ENCODE measurements at regions of chr19 and their contacts with region 1.

Region 1: DNA sequence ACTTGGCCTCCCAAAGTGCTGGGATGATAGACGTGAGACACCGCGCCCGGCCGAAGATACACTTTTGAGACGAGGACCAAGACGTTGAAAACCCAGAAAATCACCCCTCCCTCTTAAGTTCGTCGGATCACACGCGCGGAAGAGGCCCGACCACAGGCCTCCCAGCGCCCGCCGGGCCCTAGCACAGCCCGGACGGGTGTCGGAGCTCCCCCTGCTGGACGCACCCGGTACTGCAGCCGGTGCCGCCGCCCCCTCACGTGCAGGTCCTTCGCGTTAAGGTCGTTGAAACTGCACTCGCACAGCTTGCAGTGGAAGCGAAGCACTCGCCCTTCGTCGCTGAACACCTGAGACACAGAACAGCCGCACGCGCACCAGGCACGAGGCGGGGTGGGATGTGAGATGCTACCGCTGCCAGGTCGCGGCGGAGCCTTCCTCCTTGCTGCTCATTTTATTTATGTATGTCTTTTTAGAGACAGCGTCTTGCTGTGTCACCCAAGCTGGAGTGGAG is 35.7 kb upstream of the MATK start:
- DNase-seq: peak; percentile 88
- ATAC-seq: peak; percentile 94
- H3K4me3 ChIP-seq: no peak overlapping the region
- H3K4me3 Mint-ChIP-seq: peak overlapping the region; percentile 23
- H3K27ac ChIP-seq: no peak overlapping the region
- H3K27ac Mint-ChIP-seq: peak overlapping the region; percentile 15
- H3K4me1 ChIP-seq: peaks cover 6 to 16% of the 10 kb centered on the region in 2 donors
- H3K4me1 Mint-ChIP-seq: peaks cover 13% of the 10 kb centered on the region
- H3K27me3 ChIP-seq: peaks cover 0 to 4% (median 0%) of the 10 kb centered on the region in 4 experiments
- H3K27me3 Mint-ChIP-seq: peaks cover 3% of the 10 kb centered on the region
- CTCF ChIP-seq: peak; percentile 99

Region 2: GRCh38 chr19:3665681-3666544 is 156.0 kb before region 1 on chr19:
- CTCF ChIA-PET with region 1: interaction called, 4 read pairs
- POLR2A ChIA-PET with region 1: no interaction called
- intact Hi-C with region 1: loop called (anchors 5 kb)
- DNase-seq: peak; percentile 82
- ATAC-seq: peak; percentile 89
- H3K4me3 ChIP-seq: peak overlapping the region in 4 of 5 experiments; percentile 12 to 50 (median 32)
- H3K4me3 Mint-ChIP-seq: peak overlapping the region; percentile 74
- H3K27ac ChIP-seq: peak overlapping the region in 1 of 2 donors; percentile 55
- H3K27ac Mint-ChIP-seq: peak overlapping the region; percentile 65
- H3K4me1 ChIP-seq: peaks cover 23 to 28% of the 10 kb centered on the region in 2 donors
- H3K4me1 Mint-ChIP-seq: peaks cover 38% of the 10 kb centered on the region
- H3K27me3 ChIP-seq: peaks cover 0 to 4% (median 2%) of the 10 kb centered on the region in 4 experiments
- H3K27me3 Mint-ChIP-seq: no peaks in the 10 kb centered on the region
- CTCF ChIP-seq: peak; percentile 94

Region 3: GRCh38 chr19:3809881-3810707 is 11.8 kb before region 1 on chr19:
- CTCF ChIA-PET with region 1: interaction called, 14 read pairs
- POLR2A ChIA-PET with region 1: no interaction called
- intact Hi-C with region 1: loop called (anchors 1 kb)
- DNase-seq: peak; percentile 83
- ATAC-seq: peak; percentile 67
- H3K4me3 ChIP-seq: peak overlapping the region in 4 of 5 experiments; percentile 0 to 44 (median 14)
- H3K4me3 Mint-ChIP-seq: peak overlapping the region; percentile 63
- H3K27ac ChIP-seq: peak overlapping the region; percentile 71 to 85
- H3K27ac Mint-ChIP-seq: peak overlapping the region; percentile 76
- H3K4me1 ChIP-seq: peaks cover 44 to 66% of the 10 kb centered on the region in 2 donors
- H3K4me1 Mint-ChIP-seq: peaks cover 63% of the 10 kb centered on the region
- H3K27me3 ChIP-seq: no peaks in the 10 kb centered on the region
- H3K27me3 Mint-ChIP-seq: no peaks in the 10 kb centered on the region
- CTCF ChIP-seq: no peak

Measured in B cell (primary cell).